Activated CD4-positive, alpha-beta memory T cell treated with anti-CD3 and anti-CD28 coated beads, Interleukin-2, amount 10 ng/mL, durations not matched to agents 7 days and 5 days (primary cell): ENCODE measurements at regions of chr14 and their contacts with region 1.

Region 1: GRCh38 chr14:24241829-24242443 is 487 bp downstream of the TINF2 start:
- DNase-seq: peak; percentile 94
- H3K4me3 Mint-ChIP-seq: peak overlapping the region; percentile 89
- H3K27ac Mint-ChIP-seq: peak overlapping the region; percentile 96
- H3K4me1 Mint-ChIP-seq: peaks cover 61% of the 10 kb centered on the region
- H3K27me3 Mint-ChIP-seq: no peaks in the 10 kb centered on the region

Region 2: DNA sequence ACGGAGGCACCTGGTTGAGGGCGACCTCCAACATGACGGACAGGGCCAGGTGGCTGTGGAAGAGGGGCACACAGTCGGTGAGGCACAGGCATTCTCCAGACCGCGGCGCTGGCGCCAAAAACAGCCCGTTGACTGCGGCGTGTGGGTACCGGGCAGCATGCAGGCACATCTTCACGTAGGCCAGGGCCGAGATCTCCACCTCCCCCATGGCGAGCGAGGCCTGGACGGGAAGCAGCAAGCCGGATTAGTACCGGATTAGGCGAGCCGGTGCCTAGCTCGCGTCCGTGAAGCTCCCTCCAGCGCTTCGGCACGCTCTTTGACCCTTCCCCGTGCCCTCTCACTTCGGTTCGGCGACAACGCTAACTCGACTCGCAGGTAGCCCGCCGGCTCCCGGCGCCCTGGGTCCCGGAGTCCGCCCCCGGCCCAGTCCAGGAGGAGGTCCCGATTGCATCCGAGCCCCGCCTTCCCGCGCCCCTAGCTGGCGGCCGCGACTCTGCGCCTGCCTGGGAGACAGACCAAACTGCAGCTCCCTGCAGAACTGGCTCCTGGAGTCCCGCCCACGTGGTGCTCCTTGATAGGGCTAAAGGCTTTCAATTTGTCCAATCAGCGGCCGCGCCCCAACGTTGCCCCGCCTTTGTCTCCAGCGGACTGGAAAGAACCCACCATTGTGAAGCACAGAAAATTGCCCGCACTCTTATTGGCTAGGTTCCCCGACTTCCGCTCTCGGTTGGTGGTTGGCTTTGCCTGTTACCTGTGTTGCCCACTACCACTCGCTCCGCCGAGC is 100.6 kb before region 1 on chr14 and contains the start of gene EMC9:
- CTCF ChIA-PET with region 1: interaction called, 8 read pairs
- POLR2A ChIA-PET with region 1: interaction called, 24 read pairs
- DNase-seq: peak; percentile 100
- H3K4me3 Mint-ChIP-seq: peak within 1 kb of the TSS; percentile 93
- H3K27ac Mint-ChIP-seq: peak within 1 kb of the TSS; percentile 92
- H3K4me1 Mint-ChIP-seq: peaks cover 73% of the 10 kb centered on the region
- H3K27me3 Mint-ChIP-seq: no peaks in the 10 kb centered on the region
- total RNA-seq, gene EMC9: 45.0 to 51.7 TPM

Region 3: GRCh38 chr14:24195191-24196070 is 46.5 kb before region 1 on chr14 and contains the start of gene TM9SF1:
- CTCF ChIA-PET with region 1: interaction called, 12 read pairs
- POLR2A ChIA-PET with region 1: interaction called, 30 read pairs
- DNase-seq: peak; percentile 90
- H3K4me3 Mint-ChIP-seq: peak within 1 kb of the TSS; percentile 96
- H3K27ac Mint-ChIP-seq: peak within 1 kb of the TSS; percentile 95
- H3K4me1 Mint-ChIP-seq: peaks cover 64% of the 10 kb centered on the region
- H3K27me3 Mint-ChIP-seq: no peaks in the 10 kb centered on the region
- total RNA-seq, gene TM9SF1: 30.8 to 35.1 TPM

Region 4: DNA sequence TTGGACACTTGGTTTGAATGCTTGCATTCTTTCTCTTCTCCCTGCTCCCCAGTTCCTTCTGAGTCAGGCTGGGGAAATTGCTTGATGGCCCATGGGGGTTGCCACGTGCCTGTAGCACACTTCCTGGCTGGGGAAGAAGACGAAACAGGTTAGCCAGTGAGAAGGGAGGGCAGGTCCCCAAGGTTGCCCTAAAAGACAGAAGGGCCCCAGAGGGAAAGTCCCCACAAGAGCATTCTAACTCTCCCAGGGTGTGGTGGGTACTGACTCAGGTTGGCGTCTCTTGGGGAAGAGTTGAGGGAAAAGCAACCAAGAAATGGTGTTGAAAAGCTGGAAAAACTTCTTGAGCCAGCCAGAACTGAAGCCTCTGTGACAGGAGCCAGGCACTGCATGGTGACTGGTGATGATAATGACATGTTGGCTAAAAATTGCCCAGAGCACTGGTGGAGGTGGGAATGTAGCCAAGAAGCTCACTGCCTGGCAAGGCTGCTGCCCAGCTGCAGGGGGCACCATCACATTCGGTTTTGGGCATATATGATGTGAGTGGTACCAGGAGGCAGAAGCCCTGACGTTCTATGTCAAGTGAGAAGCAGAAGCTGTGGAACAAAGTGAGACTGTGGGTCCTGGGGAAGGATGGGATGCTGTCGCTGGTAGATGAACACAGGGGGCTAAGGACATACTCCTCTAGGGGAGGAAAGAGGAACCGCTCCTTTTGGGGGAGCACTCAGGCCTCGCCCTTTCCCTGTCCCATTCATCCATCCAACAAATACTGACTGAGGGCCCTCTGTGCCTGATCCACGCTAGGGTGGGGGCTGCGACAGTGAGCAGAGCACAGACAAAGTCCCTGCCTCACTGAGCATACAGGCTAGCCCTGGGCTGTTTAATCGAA is 37.6 kb after region 1 on chr14:
- CTCF ChIA-PET with region 1: interaction called, 14 read pairs
- POLR2A ChIA-PET with region 1: interaction called, 19 read pairs
- DNase-seq: peak; percentile 50
- H3K4me3 Mint-ChIP-seq: no peak overlapping the region
- H3K27ac Mint-ChIP-seq: no peak overlapping the region
- H3K4me1 Mint-ChIP-seq: peaks cover 25% of the 10 kb centered on the region
- H3K27me3 Mint-ChIP-seq: peaks cover 5% of the 10 kb centered on the region

Region 5: GRCh38 chr14:24310646-24311604 is 69.0 kb after region 1 on chr14 and contains the start of gene LTB4R:
- CTCF ChIA-PET with region 1: interaction called, 40 read pairs
- POLR2A ChIA-PET with region 1: interaction called, 33 read pairs
- DNase-seq: peak; percentile 76
- H3K4me3 Mint-ChIP-seq: peak within 1 kb of the TSS; percentile 87
- H3K27ac Mint-ChIP-seq: peak within 1 kb of the TSS; percentile 96
- H3K4me1 Mint-ChIP-seq: peaks cover 75% of the 10 kb centered on the region
- H3K27me3 Mint-ChIP-seq: no peaks in the 10 kb centered on the region
- total RNA-seq, gene LTB4R: 36.1 to 37.9 TPM

Region 6: DNA sequence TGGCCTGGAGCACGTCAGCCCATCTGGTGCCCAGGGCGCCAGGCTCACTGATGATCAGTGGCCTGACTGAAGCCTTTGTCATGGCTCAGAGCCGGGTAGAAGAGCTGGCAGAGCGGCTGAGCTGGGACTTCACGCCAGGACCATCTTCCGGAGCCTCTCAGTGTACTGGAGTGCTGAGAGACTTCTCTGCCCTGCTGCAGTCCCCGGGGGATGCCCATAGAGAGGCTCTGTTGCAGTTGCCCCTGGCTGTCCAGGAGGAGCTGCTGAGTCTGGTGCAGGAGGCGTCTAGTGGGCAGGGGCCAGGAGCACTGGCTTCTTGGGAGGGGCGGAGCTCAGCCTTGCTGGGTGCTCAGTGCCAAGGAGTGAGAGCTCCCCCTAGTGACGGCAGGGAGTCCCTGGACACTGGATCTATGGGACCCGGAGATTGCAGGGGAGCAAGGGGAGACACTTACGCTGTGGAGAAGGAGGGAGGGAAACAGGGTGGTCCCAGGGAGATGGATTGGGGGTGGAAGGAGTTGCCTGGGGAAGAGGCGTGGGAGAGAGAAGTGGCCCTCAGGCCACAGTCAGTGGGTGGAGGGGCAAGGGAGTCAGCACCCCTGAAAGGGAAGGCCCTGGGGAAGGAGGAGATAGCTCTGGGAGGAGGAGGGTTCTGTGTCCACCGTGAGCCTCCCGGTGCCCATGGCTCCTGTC is 189.8 kb after region 1 on chr14:
- CTCF ChIA-PET with region 1: interaction called, 56 read pairs
- POLR2A ChIA-PET with region 1: interaction called, 57 read pairs
- DNase-seq: peak; percentile 92
- H3K4me3 Mint-ChIP-seq: peak overlapping the region; percentile 92
- H3K27ac Mint-ChIP-seq: peak overlapping the region; percentile 92
- H3K4me1 Mint-ChIP-seq: peaks cover 60% of the 10 kb centered on the region
- H3K27me3 Mint-ChIP-seq: no peaks in the 10 kb centered on the region